ENCODE measurements at regions of chr7 and their contacts with region 1.

Region 1: GRCh38 chr7:28144266-28144665 is 36.3 kb downstream of the JAZF1 start:
- DNase-seq: no peak
- H3K4me3 ChIP-seq: no peak overlapping the region
- H3K27ac ChIP-seq: no peak overlapping the region
- H3K4me1 ChIP-seq: peaks cover 14% of the 10 kb centered on the region
- CTCF ChIP-seq: peak; percentile 63

Region 2: GRCh38 chr7:28272461-28272877 is 128.2 kb after region 1 on chr7:
- CTCF ChIA-PET with region 1: no interaction called
- POLR2A ChIA-PET with region 1: no interaction called
- intact Hi-C with region 1: loop called (anchors 5 kb)
- DNase-seq: peak; percentile 47
- H3K4me3 ChIP-seq: no peak overlapping the region
- H3K27ac ChIP-seq: no peak overlapping the region
- H3K4me1 ChIP-seq: peaks cover 10% of the 10 kb centered on the region
- CTCF ChIP-seq: peak; percentile 83

Measured in OCI-LY7 (cell line).